IMR-90 (cell line): ENCODE measurements at regions of chr17 and their contacts with region 1.

Region 1: GRCh38 chr17:33292184-33292980 is 713 bp downstream of the ASIC2 start:
- DNase-seq: peak; percentile 20
- ATAC-seq: peak; percentile 65
- H3K4me3 ChIP-seq: peak overlapping the region; percentile 52
- H3K27ac ChIP-seq: no peak overlapping the region; the same call in 1 of the 2 replicates
- H3K4me1 ChIP-seq: no peaks in the 10 kb centered on the region; the same call in 1 of the 2 replicates
- H3K27me3 ChIP-seq: peaks cover 23% of the 10 kb centered on the region
- CTCF ChIP-seq: peak; percentile 30
- POLR2A ChIP-seq: no peak
- RAD21 ChIP-seq: peak; percentile 33

Region 2: GRCh38 chr17:33038740-33039139 is 253.6 kb before region 1 on chr17:
- CTCF ChIA-PET with region 1: interaction called, 3 read pairs
- POLR2A ChIA-PET with region 1: no interaction called
- dilution Hi-C with region 1: no loop called
- in situ Hi-C with region 1: no loop called
- intact Hi-C with region 1: loop called (anchors 2 kb)
- DNase-seq: peak; percentile 15
- ATAC-seq: peak; percentile 69
- H3K4me3 ChIP-seq: no peak overlapping the region
- H3K27ac ChIP-seq: no peak overlapping the region
- H3K4me1 ChIP-seq: no peaks in the 10 kb centered on the region
- H3K27me3 ChIP-seq: no peaks in the 10 kb centered on the region
- CTCF ChIP-seq: peak; percentile 59
- POLR2A ChIP-seq: no peak
- RAD21 ChIP-seq: peak; percentile 55

Region 3: GRCh38 chr17:33169580-33170285 is 122.6 kb before region 1 on chr17:
- CTCF ChIA-PET with region 1: no interaction called
- POLR2A ChIA-PET with region 1: interaction called, 3 read pairs
- dilution Hi-C with region 1: no loop called
- in situ Hi-C with region 1: no loop called
- intact Hi-C with region 1: loop called (anchors 10 kb)
- DNase-seq: peak; percentile 57
- ATAC-seq: peak; percentile 67
- H3K4me3 ChIP-seq: no peak overlapping the region
- H3K27ac ChIP-seq: no peak overlapping the region
- H3K4me1 ChIP-seq: no peaks in the 10 kb centered on the region
- H3K27me3 ChIP-seq: no peaks in the 10 kb centered on the region; the same call in 1 of the 2 replicates
- CTCF ChIP-seq: no peak
- POLR2A ChIP-seq: no peak
- RAD21 ChIP-seq: no peak

Region 4: GRCh38 chr17:33218657-33219601 is 73.5 kb before region 1 on chr17:
- CTCF ChIA-PET with region 1: interaction called, 3 read pairs
- POLR2A ChIA-PET with region 1: no interaction called
- dilution Hi-C with region 1: no loop called
- in situ Hi-C with region 1: no loop called
- intact Hi-C with region 1: loop called (anchors 5 kb)
- DNase-seq: peak; percentile 56
- ATAC-seq: peak; percentile 91
- H3K4me3 ChIP-seq: no peak overlapping the region
- H3K27ac ChIP-seq: peak overlapping the region; percentile 61
- H3K4me1 ChIP-seq: peaks cover 10% of the 10 kb centered on the region; the same call in 1 of the 2 replicates
- H3K27me3 ChIP-seq: no peaks in the 10 kb centered on the region
- CTCF ChIP-seq: no peak
- POLR2A ChIP-seq: no peak
- RAD21 ChIP-seq: no peak

Region 5: DNA sequence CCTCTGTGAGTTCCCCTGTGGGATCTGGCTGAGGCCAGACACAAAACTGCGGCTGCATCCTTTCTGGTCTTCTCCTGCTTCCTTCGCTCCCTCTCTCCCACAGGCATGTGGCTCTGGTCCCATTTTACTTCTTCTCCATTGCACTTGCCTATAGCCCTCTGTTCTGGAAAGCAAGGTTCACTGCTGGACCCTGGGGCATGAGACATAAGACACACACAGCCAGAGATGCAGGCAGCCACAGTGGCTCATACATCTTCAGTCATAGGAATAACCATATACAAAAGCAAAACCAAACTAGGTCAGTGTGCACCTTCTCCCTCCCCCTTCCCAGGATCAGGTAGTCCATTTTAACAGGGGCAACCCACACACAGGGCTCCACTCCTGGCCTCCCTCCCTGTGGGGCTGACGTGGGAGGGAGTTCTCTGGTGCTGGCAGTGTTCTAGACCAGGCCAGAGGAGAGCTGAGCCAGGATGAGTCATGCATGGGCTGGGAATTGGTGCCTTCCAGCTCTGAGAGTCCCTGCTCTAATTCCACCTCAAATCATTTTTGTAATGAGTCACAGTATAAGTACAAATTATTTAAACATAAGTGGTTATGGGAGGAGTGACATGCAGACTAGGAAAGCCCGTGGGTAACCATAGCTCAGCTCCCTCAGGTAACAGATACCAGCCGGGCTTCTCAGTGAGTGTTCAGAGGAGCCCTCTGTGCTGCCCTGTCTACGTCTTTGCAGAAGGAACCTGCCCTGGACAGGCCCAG is 57.3 kb before region 1 on chr17:
- CTCF ChIA-PET with region 1: no interaction called
- POLR2A ChIA-PET with region 1: no interaction called
- dilution Hi-C with region 1: no loop called
- in situ Hi-C with region 1: no loop called
- intact Hi-C with region 1: loop called (anchors 1 kb)
- DNase-seq: peak; percentile 97
- ATAC-seq: peak; percentile 99
- H3K4me3 ChIP-seq: no peak overlapping the region
- H3K27ac ChIP-seq: no peak overlapping the region
- H3K4me1 ChIP-seq: peaks cover 11% of the 10 kb centered on the region
- H3K27me3 ChIP-seq: no peaks in the 10 kb centered on the region
- CTCF ChIP-seq: no peak
- POLR2A ChIP-seq: no peak
- RAD21 ChIP-seq: no peak

Region 6: GRCh38 chr17:33245183-33245582 is 47.2 kb before region 1 on chr17:
- CTCF ChIA-PET with region 1: no interaction called
- POLR2A ChIA-PET with region 1: no interaction called
- dilution Hi-C with region 1: no loop called
- in situ Hi-C with region 1: no loop called
- intact Hi-C with region 1: no loop called
- DNase-seq: no peak
- ATAC-seq: no peak
- H3K4me3 ChIP-seq: no peak overlapping the region
- H3K27ac ChIP-seq: no peak overlapping the region
- H3K4me1 ChIP-seq: peaks cover 6% of the 10 kb centered on the region; the same call in 1 of the 2 replicates
- H3K27me3 ChIP-seq: no peaks in the 10 kb centered on the region
- CTCF ChIP-seq: no peak
- POLR2A ChIP-seq: no peak
- RAD21 ChIP-seq: no peak

Region 7: DNA sequence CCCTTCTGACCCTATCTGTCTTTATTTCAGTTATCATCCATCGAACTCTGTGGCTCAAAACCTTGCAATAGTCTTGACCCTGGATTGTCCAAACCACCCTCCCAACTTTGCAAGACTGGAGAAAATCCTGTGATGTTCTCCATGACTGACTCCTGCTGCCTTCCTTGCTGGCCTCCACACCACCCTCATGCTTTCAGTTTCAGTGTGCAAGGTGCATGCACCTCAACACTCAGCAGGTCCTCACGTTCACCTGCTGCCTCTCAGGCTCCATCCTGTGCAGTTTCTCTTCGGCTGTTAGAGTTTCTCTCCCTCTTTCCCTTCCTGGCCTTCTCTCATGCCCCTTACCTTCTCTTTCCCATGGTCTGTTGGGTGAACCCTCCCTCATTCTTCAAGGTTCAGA is 60.1 kb after region 1 on chr17:
- CTCF ChIA-PET with region 1: no interaction called
- POLR2A ChIA-PET with region 1: no interaction called
- dilution Hi-C with region 1: no loop called
- in situ Hi-C with region 1: no loop called
- intact Hi-C with region 1: no loop called
- DNase-seq: no peak
- ATAC-seq: no peak
- H3K4me3 ChIP-seq: no peak overlapping the region
- H3K27ac ChIP-seq: no peak overlapping the region
- H3K4me1 ChIP-seq: no peaks in the 10 kb centered on the region
- H3K27me3 ChIP-seq: no peaks in the 10 kb centered on the region
- CTCF ChIP-seq: no peak
- POLR2A ChIP-seq: no peak
- RAD21 ChIP-seq: no peak

Region 8: DNA sequence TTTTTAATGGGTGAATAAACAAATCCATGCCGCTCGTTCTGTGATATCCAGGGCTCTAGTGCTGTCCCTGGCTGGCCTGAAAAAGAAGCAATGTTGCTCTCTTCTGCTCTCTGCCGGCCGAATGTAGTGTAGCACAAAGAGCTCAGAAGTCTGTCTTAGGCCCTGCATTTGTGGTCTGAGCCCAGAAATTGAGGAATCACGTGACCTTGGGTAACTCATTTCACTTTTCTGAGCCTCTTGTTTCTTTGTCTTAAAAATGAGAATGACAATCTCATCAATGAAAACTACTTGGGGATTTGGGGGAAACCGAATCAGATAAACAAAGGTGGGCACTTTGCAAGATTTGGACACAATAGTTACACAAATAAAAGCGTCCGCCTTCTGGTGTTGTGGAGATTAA is 382.3 kb after region 1 on chr17:
- CTCF ChIA-PET with region 1: no interaction called
- POLR2A ChIA-PET with region 1: no interaction called
- dilution Hi-C with region 1: no loop called
- in situ Hi-C with region 1: no loop called
- intact Hi-C with region 1: loop called (anchors 2 kb)
- DNase-seq: peak; percentile 55
- ATAC-seq: peak; percentile 99
- H3K4me3 ChIP-seq: no peak overlapping the region
- H3K27ac ChIP-seq: no peak overlapping the region
- H3K4me1 ChIP-seq: no peaks in the 10 kb centered on the region
- H3K27me3 ChIP-seq: no peaks in the 10 kb centered on the region
- CTCF ChIP-seq: peak; percentile 67
- POLR2A ChIP-seq: no peak
- RAD21 ChIP-seq: peak; percentile 49